Naive thymus-derived CD4-positive, alpha-beta T cell (primary cell): ENCODE measurements at regions of chr7 and their contacts with region 1.

Region 1: DNA sequence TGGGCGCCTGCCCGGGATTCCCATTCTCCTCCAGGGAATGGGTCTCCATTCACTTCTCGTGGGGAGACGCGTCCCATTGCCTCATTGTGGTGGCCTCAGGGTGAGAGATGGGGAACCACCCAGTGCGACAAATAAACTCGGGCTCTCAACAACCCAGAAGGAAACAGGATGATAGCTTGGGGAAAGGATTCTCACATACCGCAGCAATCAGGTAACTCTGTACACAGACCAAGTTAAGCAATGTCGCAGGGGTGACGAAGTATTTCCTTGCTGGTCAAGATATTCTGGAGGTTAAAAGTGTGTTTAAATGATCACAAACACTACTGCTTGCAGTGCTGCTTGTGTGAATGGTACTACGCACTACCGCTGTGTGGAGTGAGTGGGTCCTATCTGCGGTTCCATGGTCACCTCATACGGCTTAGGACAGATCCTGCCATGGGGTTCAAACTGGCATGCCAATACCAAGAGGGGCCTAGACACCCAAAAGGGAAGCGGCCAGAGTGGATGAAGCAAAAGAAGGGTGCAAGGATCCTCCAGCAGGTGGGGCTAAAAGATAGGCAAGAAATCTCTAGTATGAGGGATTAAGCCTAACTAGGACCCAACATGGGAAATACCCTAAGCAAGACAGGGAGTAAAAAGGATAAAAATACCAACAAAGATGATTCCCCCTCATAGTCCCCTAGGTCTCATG is 143.8 kb upstream of the TMEM106B start:
- DNase-seq: peak; percentile 15 to 69 (median 58)
- ATAC-seq: peak; percentile 72
- H3K4me3 ChIP-seq: no peak overlapping the region
- H3K4me3 Mint-ChIP-seq: no peak overlapping the region
- H3K27ac ChIP-seq: no peak overlapping the region
- H3K27ac Mint-ChIP-seq: peak overlapping the region in 1 of 9 donors; percentile 73
- H3K4me1 ChIP-seq: no peaks in the 10 kb centered on the region
- H3K4me1 Mint-ChIP-seq: peaks cover 0 to 5% (median 0%) of the 10 kb centered on the region in 7 donors
- H3K27me3 ChIP-seq: no peaks in the 10 kb centered on the region
- H3K27me3 Mint-ChIP-seq: no peaks in the 10 kb centered on the region

Region 2: DNA sequence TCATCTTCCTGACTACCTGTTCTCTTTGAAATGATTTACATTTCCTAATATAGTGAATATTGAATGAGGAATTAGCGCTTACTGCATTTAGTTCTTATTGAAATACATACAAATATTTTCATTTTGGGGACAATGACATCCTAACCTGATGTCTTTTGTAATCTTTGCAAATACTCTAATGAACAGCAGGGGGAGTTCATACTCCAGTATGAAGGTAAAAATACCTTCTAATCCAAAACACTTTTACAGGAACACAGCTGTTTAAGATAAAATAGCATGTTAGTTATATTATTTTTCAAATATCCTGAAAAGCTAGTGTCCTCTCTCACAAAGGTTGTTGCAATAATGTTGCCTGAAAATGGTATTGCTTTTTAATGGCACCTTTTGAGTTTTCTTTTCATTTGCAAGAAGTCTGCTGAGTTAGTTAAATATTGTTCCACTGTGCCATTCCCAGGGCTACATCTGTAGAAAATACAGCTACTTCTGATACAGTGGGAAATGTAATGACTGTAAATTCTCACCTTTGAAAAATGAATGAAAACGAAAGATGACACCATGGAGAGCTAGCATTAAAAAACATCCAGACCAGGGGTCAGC is 693.6 kb before region 1 on chr7:
- CTCF ChIA-PET with region 1: no interaction called
- POLR2A ChIA-PET with region 1: no interaction called
- intact Hi-C with region 1: loop called in 1 of 2 experiments (anchors 2 kb)
- DNase-seq: no peak
- ATAC-seq: no peak
- H3K4me3 ChIP-seq: no peak overlapping the region
- H3K4me3 Mint-ChIP-seq: no peak overlapping the region
- H3K27ac ChIP-seq: no peak overlapping the region
- H3K27ac Mint-ChIP-seq: no peak overlapping the region
- H3K4me1 ChIP-seq: no peaks in the 10 kb centered on the region
- H3K4me1 Mint-ChIP-seq: no peaks in the 10 kb centered on the region
- H3K27me3 ChIP-seq: no peaks in the 10 kb centered on the region
- H3K27me3 Mint-ChIP-seq: peaks cover 0 to 6% (median 0%) of the 10 kb centered on the region in 5 donors

Region 3: DNA sequence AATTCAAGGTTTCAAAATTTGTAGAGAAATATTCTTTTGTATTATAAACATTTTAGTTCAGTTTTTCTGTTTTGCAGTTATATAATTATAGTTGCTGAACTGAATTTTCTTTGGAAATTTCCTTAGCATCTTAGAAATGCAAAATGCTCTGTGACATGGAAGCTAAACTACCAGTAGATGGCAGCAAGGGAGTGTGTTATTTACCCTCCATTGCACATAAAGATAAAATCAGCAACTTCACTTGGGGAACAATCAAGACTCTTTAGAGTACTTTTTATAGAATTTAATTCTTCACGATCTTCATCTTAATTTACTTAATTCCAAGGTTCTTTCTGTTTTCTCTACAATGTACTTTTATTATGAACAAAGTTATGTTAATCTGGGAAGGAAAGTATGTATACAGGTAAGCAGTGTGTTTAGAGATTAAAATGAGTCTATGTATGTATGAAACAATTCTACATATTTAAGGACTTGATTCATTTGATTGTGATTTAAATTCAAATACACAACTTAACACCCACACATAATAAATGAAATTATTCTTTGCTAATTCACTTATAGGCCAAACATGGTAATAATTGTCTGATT is 639.5 kb before region 1 on chr7:
- CTCF ChIA-PET with region 1: no interaction called
- POLR2A ChIA-PET with region 1: no interaction called
- intact Hi-C with region 1: loop called (anchors 5 kb)
- DNase-seq: peak in 4 of 9 donors; percentile 1 to 12 (median 4)
- ATAC-seq: no peak
- H3K4me3 ChIP-seq: no peak overlapping the region
- H3K4me3 Mint-ChIP-seq: no peak overlapping the region
- H3K27ac ChIP-seq: no peak overlapping the region
- H3K27ac Mint-ChIP-seq: no peak overlapping the region
- H3K4me1 ChIP-seq: no peaks in the 10 kb centered on the region
- H3K4me1 Mint-ChIP-seq: no peaks in the 10 kb centered on the region
- H3K27me3 ChIP-seq: no peaks in the 10 kb centered on the region
- H3K27me3 Mint-ChIP-seq: peaks cover 0 to 5% (median 3%) of the 10 kb centered on the region in 5 donors

Region 4: GRCh38 chr7:11648980-11649379 is 418.3 kb before region 1 on chr7:
- CTCF ChIA-PET with region 1: no interaction called
- POLR2A ChIA-PET with region 1: no interaction called
- intact Hi-C with region 1: no loop called
- DNase-seq: no peak
- ATAC-seq: no peak
- H3K4me3 ChIP-seq: no peak overlapping the region
- H3K4me3 Mint-ChIP-seq: no peak overlapping the region
- H3K27ac ChIP-seq: no peak overlapping the region
- H3K27ac Mint-ChIP-seq: no peak overlapping the region
- H3K4me1 ChIP-seq: no peaks in the 10 kb centered on the region
- H3K4me1 Mint-ChIP-seq: no peaks in the 10 kb centered on the region
- H3K27me3 ChIP-seq: no peaks in the 10 kb centered on the region
- H3K27me3 Mint-ChIP-seq: no peaks in the 10 kb centered on the region

Region 5: DNA sequence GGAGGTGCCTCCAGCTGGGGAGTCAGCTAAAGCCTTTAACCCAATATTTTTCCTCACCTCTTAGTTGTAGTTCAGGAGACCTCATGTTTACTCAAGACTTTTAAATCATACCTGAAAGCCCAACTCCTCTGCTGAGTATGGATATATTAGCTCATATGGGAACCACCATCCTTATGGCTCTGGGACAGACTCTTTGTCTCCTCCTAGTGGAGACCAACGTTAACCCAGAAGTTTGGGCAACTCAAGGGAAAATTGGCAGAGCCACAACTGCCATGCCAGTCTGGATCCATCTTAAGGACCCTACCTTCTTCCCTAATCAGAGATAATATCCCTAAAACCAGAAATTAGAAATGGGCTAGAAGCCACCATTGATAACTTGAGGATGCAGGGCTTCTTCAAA is 224.6 kb after region 1 on chr7:
- CTCF ChIA-PET with region 1: interaction called, 9 read pairs
- POLR2A ChIA-PET with region 1: no interaction called
- intact Hi-C with region 1: loop called (anchors 1 kb)
- DNase-seq: no peak
- ATAC-seq: peak; percentile 37
- H3K4me3 ChIP-seq: no peak overlapping the region
- H3K4me3 Mint-ChIP-seq: no peak overlapping the region
- H3K27ac ChIP-seq: no peak overlapping the region
- H3K27ac Mint-ChIP-seq: no peak overlapping the region
- H3K4me1 ChIP-seq: no peaks in the 10 kb centered on the region
- H3K4me1 Mint-ChIP-seq: peaks cover 0 to 10% (median 0%) of the 10 kb centered on the region in 7 donors
- H3K27me3 ChIP-seq: no peaks in the 10 kb centered on the region
- H3K27me3 Mint-ChIP-seq: peaks cover 0 to 7% (median 0%) of the 10 kb centered on the region in 5 donors

Region 6: GRCh38 chr7:12373580-12374263 is 306.4 kb after region 1 on chr7:
- CTCF ChIA-PET with region 1: no interaction called
- POLR2A ChIA-PET with region 1: no interaction called
- intact Hi-C with region 1: no loop called
- DNase-seq: no peak
- ATAC-seq: no peak
- H3K4me3 ChIP-seq: no peak overlapping the region
- H3K4me3 Mint-ChIP-seq: no peak overlapping the region
- H3K27ac ChIP-seq: no peak overlapping the region
- H3K27ac Mint-ChIP-seq: no peak overlapping the region
- H3K4me1 ChIP-seq: no peaks in the 10 kb centered on the region
- H3K4me1 Mint-ChIP-seq: no peaks in the 10 kb centered on the region
- H3K27me3 ChIP-seq: no peaks in the 10 kb centered on the region
- H3K27me3 Mint-ChIP-seq: peaks cover 0 to 4% (median 1%) of the 10 kb centered on the region in 5 donors

Region 7: DNA sequence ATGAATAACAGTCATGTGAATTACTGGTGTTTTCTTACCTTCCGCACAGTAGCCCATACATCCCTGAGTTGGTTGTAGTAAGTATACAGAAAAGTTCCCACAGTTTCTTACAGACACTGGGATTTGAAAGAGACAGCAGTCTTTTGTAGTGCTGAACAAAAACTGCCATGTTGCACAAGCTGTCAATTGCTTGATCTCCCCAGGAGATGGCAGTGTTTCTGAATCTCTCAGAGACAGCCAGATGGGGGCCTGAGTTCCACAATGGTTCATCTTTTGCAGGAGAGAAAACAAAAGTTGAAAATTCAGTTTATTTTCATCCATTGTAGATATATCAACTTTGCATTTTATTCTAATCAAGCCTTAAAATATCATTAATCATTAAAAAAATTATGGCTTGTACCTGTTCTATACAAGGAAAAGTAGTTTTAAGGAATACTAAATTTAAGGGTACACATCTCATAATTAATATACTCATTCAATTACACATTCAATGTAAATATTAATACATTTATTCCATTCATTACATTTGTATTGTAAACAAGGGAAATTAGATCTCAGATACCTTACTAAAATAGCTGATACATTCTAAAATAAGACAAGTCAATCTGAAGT is 321.9 kb after region 1 on chr7:
- CTCF ChIA-PET with region 1: no interaction called
- POLR2A ChIA-PET with region 1: no interaction called
- intact Hi-C with region 1: loop called (anchors 1 to 2 kb)
- DNase-seq: peak in 7 of 9 donors; percentile 7 to 47 (median 26)
- ATAC-seq: peak; percentile 81
- H3K4me3 ChIP-seq: no peak overlapping the region
- H3K4me3 Mint-ChIP-seq: no peak overlapping the region
- H3K27ac ChIP-seq: no peak overlapping the region
- H3K27ac Mint-ChIP-seq: no peak overlapping the region
- H3K4me1 ChIP-seq: no peaks in the 10 kb centered on the region
- H3K4me1 Mint-ChIP-seq: no peaks in the 10 kb centered on the region
- H3K27me3 ChIP-seq: no peaks in the 10 kb centered on the region
- H3K27me3 Mint-ChIP-seq: no peaks in the 10 kb centered on the region